Left colon (tissue), 2 donors: ENCODE measurements at regions of chr10 and their contacts with region 1.

Region 1: DNA sequence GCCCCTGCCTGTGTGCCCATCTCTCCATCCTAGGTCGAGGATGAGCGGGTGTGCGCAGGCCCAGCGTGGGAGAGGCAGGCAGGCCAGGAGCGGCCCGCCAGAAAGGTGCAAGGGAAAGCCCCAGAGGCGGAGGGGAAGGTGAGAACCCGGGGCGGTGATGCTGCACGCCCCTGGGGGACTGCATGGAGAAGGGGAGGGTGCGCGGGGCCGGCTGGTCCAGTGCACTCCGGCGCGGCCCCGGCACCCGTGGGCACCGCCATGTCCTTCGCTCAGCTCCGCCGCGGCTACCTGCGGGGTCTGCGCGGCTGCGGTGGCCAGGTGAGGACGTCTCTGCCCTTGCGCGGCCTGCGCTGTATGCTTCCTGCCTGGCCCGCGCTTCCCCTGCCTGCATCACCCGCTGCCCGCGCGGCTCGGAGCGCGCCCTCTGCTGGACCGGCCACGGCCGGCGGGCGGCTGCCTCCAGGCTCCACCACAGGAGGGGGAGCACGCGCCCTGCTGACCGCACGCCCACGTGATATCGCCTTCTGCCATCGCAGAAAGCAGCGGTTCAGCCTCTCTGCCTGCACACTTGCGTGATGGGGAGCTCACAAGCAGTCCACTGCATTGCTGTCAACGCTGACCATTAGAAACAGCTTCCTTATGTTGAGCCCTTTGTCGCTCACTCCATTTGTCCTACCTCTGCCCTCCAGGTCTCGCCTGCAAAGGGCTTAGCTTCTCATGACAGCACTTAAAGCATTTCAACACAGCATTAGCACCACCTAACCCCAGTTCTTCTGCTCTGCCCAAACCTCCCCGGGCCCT is 73.9 kb downstream of the CXCL12 start:
- DNase-seq: peak; percentile 73 to 83
- ATAC-seq: peak; percentile 99

Region 2: GRCh38 chr10:43689955-43690771 is 620.8 kb before region 1 on chr10:
- intact Hi-C with region 1: loop called in 1 of 2 experiments (anchors 5 kb)
- DNase-seq: peak; percentile 74 to 88
- ATAC-seq: peak; percentile 99